OCI-LY7 (cell line): ENCODE measurements at regions of chr3 and their contacts with region 1.

Region 1: GRCh38 chr3:125594581-125595011 is 701 bp downstream of the OSBPL11 start:
- DNase-seq: peak; percentile 10
- H3K4me3 ChIP-seq: peak overlapping the region; percentile 94
- H3K27ac ChIP-seq: peak overlapping the region; percentile 79
- H3K4me1 ChIP-seq: peaks cover 39% of the 10 kb centered on the region
- CTCF ChIP-seq: no peak

Region 2: DNA sequence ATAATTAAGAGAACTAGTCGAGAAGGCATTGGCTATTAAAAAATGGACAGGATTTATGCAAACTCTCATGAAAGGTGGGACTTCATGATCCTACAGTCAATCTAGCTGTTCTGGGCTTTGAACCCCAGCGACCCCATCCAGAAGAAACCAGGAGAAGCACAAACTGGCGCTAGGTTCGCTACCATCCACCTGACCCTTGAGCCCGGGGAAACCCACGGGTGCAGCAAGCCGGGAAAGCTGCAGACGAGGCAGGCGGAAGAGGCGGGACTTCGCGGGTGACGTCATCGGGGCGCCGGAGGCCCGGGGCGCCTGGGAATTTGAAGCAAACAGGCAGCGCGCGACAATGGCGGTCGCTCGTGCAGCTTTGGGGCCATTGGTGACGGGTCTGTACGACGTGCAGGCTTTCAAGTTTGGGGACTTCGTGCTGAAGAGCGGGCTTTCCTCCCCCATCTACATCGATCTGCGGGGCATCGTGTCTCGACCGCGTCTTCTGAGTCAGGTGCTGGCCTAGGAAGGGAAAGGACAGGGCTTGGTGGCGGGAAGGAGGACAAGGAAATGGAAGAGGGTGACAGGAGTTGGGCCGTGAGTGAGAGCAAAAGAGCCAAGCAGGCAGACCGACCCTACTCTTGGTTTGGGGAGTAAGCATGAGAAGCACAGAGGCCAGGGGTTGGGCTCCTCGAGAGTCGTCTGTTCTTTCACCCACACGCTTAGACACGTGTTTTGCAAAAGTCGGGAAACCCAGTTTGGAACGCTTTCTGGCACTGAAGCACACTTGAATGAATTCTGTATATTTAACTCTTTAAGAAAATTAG is 864.3 kb before region 1 on chr3 and contains the start of gene UMPS:
- CTCF ChIA-PET with region 1: no interaction called
- POLR2A ChIA-PET with region 1: no interaction called
- intact Hi-C with region 1: loop called (anchors 10 kb)
- DNase-seq: peak; percentile 90
- H3K4me3 ChIP-seq: peak within 1 kb of the TSS; percentile 90
- H3K27ac ChIP-seq: peak within 1 kb of the TSS; percentile 43
- H3K4me1 ChIP-seq: peaks cover 26% of the 10 kb centered on the region
- CTCF ChIP-seq: no peak
- total RNA-seq, gene UMPS: 24.8 and 34.9 TPM in 2 replicates

Region 3: DNA sequence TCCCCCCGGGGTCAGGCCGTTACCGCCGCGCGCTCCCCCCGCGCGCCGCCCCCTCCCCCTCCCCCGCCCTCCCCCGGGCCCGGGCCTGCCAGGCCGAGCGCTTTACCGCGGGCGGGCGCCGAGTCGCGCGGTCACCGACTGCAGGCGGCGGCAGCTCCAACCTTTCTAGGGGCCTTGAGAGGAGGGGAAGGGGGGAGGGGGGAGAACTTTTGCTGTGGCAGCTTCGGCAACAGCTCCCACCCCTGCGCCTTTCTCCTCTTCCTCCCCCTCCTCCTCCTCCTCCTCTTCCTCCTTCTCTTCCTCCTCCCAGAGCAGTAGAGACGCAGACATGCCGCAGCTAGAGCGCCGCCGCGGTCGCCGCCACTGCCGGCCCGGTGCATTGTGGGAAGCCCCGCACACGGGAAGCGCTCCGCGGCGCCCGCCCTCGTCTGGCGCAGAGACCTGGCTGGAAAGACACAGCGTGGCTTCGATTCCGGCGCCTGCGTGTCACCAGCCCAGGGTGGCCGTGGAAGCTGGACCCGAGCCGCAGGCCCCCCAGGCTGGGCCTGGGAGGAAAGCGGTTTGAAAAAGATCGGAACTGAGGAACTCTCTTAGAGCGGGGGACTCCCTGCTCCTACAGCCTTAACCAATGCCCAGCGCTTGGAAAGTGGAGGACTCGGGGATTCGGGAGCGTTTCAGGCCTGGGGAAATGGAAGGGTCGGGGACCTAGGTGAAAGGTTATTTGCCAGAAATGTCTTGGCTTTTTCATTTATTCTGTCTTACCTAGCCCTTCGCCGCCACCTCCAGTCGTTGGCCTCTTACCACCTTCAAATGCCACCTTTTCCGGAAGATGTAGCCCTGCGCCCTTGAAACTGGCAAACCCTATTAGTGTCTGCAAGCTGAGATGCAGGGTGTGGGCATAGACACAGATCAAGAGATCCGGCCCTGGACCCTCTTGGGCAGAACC is 219.3 kb before region 1 on chr3 and contains the start of gene ZNF148:
- CTCF ChIA-PET with region 1: no interaction called
- POLR2A ChIA-PET with region 1: no interaction called
- intact Hi-C with region 1: loop called (anchors 1 kb)
- DNase-seq: peak; percentile 92
- H3K4me3 ChIP-seq: peak within 1 kb of the TSS; percentile 94
- H3K27ac ChIP-seq: peak within 1 kb of the TSS; percentile 44
- H3K4me1 ChIP-seq: peaks cover 12% of the 10 kb centered on the region
- CTCF ChIP-seq: no peak
- total RNA-seq, gene ZNF148: 19.8 and 20.9 TPM in 2 replicates

Region 4: DNA sequence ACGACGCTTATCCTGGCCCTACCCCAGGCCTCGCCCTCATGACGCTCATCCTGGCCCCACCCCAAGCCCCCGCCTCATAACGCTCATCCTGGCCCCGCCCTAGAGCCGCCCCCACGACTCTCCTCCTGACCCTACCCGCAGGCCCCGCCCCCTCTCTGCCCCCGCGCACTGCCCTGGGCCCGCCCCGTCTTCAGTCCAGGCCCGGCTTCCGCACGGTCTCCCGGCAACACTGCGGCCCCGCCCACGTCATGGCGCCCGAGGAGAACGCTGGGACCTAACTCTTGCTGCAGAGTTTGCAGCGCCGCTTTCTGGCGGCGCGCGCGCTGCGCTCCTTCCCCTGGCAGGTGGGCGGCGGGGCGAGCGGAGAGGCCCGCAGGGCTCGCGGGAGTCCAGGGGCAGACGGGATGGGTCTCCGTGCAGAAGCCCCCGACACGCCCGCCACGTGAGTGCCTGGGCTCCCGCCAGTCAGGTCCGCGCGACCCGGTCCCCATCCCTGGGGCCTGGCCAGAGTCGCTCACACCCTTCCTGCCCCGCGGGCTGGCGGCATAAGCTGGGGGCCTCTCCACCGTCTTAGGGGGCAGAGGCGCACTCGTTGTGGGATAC is 321.9 kb after region 1 on chr3:
- CTCF ChIA-PET with region 1: no interaction called
- POLR2A ChIA-PET with region 1: no interaction called
- intact Hi-C with region 1: loop called (anchors 5 kb)
- DNase-seq: peak; percentile 93
- H3K4me3 ChIP-seq: peak overlapping the region; percentile 73
- H3K27ac ChIP-seq: peak overlapping the region; percentile 84
- H3K4me1 ChIP-seq: peaks cover 23% of the 10 kb centered on the region
- CTCF ChIP-seq: peak; percentile 51

Region 5: GRCh38 chr3:126357295-126358037 is 762.9 kb after region 1 on chr3 and contains the start of gene KLF15:
- CTCF ChIA-PET with region 1: no interaction called
- POLR2A ChIA-PET with region 1: no interaction called
- intact Hi-C with region 1: loop called (anchors 10 kb)
- DNase-seq: peak; percentile 91
- H3K4me3 ChIP-seq: peak within 1 kb of the TSS; percentile 67
- H3K27ac ChIP-seq: peak within 1 kb of the TSS; percentile 67
- H3K4me1 ChIP-seq: peaks cover 49% of the 10 kb centered on the region
- CTCF ChIP-seq: no peak
- total RNA-seq, gene KLF15: 12.3 and 13.8 TPM in 2 replicates